Vagina (tissue), 2 donors: ENCODE measurements at regions of chr1 and their contacts with region 1.

Region 1: GRCh38 chr1:94926915-94927404 is at the start of gene CNN3:
- DNase-seq: no peak
- H3K4me3 ChIP-seq: peak within 1 kb of the TSS; percentile 62 to 72
- H3K27ac ChIP-seq: peak within 1 kb of the TSS; percentile 97
- H3K4me1 ChIP-seq: peaks cover 71% of the 10 kb centered on the region
- H3K27me3 ChIP-seq: no peaks in the 10 kb centered on the region
- CTCF ChIP-seq: no peak
- POLR2A ChIP-seq: peak in 1 of 2 donors; percentile 99
- total RNA-seq, gene CNN3: 250 TPM

Region 2: DNA sequence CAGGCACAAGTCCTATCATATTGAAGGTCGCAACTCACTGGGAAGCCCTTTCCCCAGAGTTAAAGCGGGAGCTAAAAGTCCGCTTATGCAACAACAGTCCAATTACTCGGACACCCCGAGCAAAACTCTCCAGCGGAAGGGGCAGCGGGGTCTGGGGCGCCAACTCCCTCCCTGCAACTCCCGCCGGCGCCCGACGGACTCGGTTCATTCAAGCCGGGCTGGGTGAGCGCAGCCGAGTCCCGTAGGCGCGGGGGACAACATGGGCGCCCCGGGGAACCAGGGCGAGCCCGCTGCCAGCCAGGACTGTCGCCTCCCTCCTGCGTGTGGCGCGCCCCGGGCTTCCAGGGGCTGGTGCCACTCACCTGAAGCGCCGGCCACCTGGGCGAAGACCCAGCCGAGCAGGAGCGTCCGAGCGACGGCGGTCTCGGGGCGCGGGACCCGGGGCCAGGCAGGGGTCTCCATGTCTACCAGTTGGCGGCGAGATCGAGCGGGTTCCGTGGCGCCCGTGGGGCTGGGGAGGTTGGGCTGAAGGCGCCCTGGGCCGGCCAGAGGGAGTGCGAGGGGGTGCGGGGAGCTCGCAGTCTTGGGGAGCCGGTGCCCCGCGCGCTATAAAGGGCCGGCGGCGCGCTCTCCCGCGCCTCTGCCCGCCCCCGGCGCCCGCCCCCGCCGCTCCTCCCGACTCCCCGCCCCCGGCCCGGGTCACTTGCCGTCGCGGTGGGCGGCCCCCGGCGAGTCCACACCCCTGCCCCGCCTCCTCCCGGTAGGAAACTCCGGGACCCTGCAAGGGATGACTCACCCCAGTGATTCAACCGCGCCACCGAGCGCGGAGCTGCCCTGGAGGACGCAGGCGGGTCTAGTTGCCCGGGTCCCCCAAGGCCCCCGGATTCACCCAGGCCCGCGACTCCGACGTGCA is 385.5 kb before region 1 on chr1 and contains the start of gene F3:
- intact Hi-C with region 1: loop called (anchors 5 kb)
- DNase-seq: peak in 1 of 2 donors; percentile 94
- H3K4me3 ChIP-seq: peak within 1 kb of the TSS; percentile 70 to 76
- H3K27ac ChIP-seq: peak within 1 kb of the TSS; percentile 88
- H3K4me1 ChIP-seq: peaks cover 39% of the 10 kb centered on the region
- H3K27me3 ChIP-seq: no peaks in the 10 kb centered on the region
- CTCF ChIP-seq: no peak
- POLR2A ChIP-seq: peak in 1 of 2 donors; percentile 91
- total RNA-seq, gene F3: 63.6 TPM

Region 3: GRCh38 chr1:94863919-94864318 is 63.0 kb before region 1 on chr1:
- intact Hi-C with region 1: loop called (anchors 2 kb)
- DNase-seq: peak in 1 of 2 donors; percentile 93
- H3K4me3 ChIP-seq: peak overlapping the region in 1 of 2 donors; percentile 10
- H3K27ac ChIP-seq: peak overlapping the region; percentile 97
- H3K4me1 ChIP-seq: peaks cover 69% of the 10 kb centered on the region
- H3K27me3 ChIP-seq: no peaks in the 10 kb centered on the region
- CTCF ChIP-seq: no peak
- POLR2A ChIP-seq: no peak

Region 4: GRCh38 chr1:94898491-94899385 is 28.2 kb before region 1 on chr1:
- intact Hi-C with region 1: no loop called
- DNase-seq: no peak
- H3K4me3 ChIP-seq: no peak overlapping the region
- H3K27ac ChIP-seq: peak overlapping the region; percentile 13
- H3K4me1 ChIP-seq: peaks cover 25% of the 10 kb centered on the region
- H3K27me3 ChIP-seq: no peaks in the 10 kb centered on the region
- CTCF ChIP-seq: no peak
- POLR2A ChIP-seq: no peak

Region 5: GRCh38 chr1:94971491-94971924 is 44.5 kb after region 1 on chr1:
- intact Hi-C with region 1: loop called (anchors 5 kb)
- DNase-seq: no peak
- H3K4me3 ChIP-seq: no peak overlapping the region
- H3K27ac ChIP-seq: peak overlapping the region; percentile 80
- H3K4me1 ChIP-seq: peaks cover 40% of the 10 kb centered on the region
- H3K27me3 ChIP-seq: no peaks in the 10 kb centered on the region
- CTCF ChIP-seq: no peak
- POLR2A ChIP-seq: no peak

Region 6: DNA sequence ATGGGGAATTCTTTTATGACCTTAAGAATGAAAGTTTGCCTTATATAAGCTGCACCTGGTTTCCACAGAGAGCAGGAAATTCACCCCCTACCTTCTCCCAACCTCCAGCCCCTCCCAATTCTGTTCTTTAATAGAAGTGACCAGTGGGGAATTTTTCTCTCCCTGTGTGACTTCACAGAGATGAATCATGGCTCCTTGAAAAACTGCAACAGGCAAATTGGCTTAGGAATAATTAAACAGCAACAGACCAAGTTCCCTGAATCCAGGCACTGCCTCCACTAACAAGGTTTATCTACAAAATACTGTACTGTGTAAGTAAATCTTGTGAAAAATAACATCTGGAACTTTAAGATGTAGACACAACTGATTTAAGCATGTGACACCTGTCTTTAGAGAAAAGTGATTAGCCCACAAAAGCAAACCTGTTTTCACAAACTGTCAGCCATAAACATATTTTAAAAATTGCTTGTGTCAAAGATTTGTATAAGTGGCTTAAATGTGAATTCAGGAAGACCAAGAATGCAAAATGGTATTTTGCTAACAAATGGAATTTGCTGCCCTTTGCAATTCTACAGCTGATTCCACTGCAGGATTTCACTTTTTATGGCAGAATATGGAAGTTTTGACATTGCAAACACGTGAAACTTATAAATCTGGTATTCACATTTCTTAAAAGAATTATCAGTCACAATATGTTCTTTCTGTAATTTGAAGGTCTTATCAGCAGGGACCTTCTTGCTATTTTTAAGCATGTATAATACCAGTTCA is 91.8 kb after region 1 on chr1:
- intact Hi-C with region 1: loop called (anchors 5 kb)
- DNase-seq: no peak
- H3K4me3 ChIP-seq: no peak overlapping the region
- H3K27ac ChIP-seq: no peak overlapping the region
- H3K4me1 ChIP-seq: peaks cover 41% of the 10 kb centered on the region
- H3K27me3 ChIP-seq: no peaks in the 10 kb centered on the region
- CTCF ChIP-seq: no peak
- POLR2A ChIP-seq: no peak